CD4-positive, alpha-beta memory T cell (primary cell): ENCODE measurements at regions of chr3 and their contacts with region 1.

Region 1: DNA sequence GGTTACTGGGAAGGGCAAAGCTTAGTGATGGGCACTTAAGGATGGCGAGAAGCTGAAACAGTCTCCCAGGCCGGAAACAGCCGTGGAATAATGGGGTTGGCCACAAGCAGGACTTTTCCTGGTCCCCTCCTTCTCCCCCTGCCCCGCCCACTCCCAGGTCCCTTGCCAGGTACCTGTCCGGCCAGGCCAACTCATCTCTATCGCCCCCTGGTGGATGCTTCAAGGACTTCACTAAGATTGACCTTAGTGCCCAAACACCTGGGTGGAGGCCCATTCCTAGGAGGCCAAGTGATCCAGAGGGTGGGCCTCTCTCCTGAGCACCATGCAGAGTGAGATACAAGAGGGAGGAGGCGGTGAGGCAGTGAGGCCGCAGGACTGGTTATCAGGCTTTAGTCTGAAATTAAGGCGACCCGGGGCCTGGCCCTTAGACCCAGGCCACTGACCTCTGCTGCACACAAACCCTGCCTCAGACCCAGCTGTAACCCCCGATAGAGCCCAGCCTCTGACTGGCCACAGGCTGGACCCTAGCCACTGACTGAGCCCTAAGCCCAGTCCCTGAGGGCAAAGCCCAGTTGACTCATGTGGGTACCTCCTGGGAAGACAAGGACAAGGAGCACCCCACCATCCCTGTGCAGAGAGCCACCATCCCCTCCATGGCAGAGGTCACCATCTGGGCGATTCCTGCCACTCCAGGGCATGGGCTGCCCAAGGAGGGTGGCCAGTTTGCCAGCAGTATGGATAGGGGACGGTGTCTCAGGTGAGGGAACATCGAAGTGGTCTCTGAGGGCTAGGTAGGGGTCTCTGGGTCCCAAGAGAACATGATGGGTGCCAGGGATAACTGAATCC is 37.6 kb downstream of the VIPR1 start:
- DNase-seq: peak; percentile 47 to 64 (median 60)
- H3K4me3 ChIP-seq: no peak overlapping the region
- H3K4me3 Mint-ChIP-seq: no peak overlapping the region
- H3K27ac ChIP-seq: no peak overlapping the region
- H3K27ac Mint-ChIP-seq: peak overlapping the region in 5 of 7 donors; percentile 17 to 72 (median 52)
- H3K4me1 ChIP-seq: peaks cover 18% of the 10 kb centered on the region
- H3K4me1 Mint-ChIP-seq: peaks cover 13 to 32% (median 25%) of the 10 kb centered on the region in 4 donors
- H3K27me3 ChIP-seq: no peaks in the 10 kb centered on the region
- H3K27me3 Mint-ChIP-seq: no peaks in the 10 kb centered on the region

Region 2: GRCh38 chr3:42497009-42497731 is 42.9 kb before region 1 on chr3:
- CTCF ChIA-PET with region 1: interaction called, 1,823 read pairs
- POLR2A ChIA-PET with region 1: interaction called, 75 read pairs
- intact Hi-C with region 1: loop called (anchors 1 kb)
- DNase-seq: no peak
- H3K4me3 ChIP-seq: no peak overlapping the region
- H3K4me3 Mint-ChIP-seq: no peak overlapping the region
- H3K27ac ChIP-seq: no peak overlapping the region
- H3K27ac Mint-ChIP-seq: peak overlapping the region in 1 of 7 donors; percentile 18
- H3K4me1 ChIP-seq: peaks cover 13% of the 10 kb centered on the region
- H3K4me1 Mint-ChIP-seq: peaks cover 3 to 17% (median 11%) of the 10 kb centered on the region in 4 donors
- H3K27me3 ChIP-seq: peaks cover 9% of the 10 kb centered on the region
- H3K27me3 Mint-ChIP-seq: peaks cover 6 to 12% of the 10 kb centered on the region in 2 donors

Region 3: DNA sequence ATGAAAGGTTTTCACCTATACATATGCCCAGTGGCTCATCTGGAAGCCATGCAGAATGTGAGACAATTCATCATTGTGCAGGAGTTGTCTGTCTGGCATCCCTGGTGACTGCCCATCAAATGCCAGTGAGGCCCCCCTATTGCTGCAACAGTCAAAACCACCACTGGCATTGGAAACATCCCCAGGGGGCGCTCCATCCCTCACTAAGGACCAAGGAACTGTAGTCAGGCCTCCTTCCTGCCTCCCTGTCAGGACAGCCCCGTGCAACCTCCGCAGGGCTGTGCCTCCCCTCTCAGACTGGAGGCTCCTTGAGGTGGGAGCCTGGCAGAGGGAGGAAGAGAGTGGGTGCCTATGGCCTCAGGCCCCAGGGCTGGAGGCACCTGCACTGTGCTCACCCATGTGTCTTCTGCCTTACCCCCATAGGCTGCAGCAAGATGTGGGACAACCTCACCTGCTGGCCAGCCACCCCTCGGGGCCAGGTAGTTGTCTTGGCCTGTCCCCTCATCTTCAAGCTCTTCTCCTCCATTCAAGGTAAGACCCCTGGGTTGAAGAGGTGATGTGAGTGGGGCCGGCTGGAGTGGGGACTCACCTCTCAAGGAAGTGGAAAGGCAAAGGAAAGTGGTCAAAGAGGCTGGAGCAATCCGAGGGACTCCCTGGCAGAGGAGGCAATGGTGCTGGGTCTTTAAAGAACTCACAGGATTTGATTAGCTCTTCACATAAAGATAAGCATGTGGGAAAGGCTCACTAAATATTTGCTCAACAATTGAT is 21.1 kb before region 1 on chr3:
- CTCF ChIA-PET with region 1: interaction called, 1,823 read pairs
- POLR2A ChIA-PET with region 1: interaction called, 22 read pairs
- intact Hi-C with region 1: loop called (anchors 1 kb)
- DNase-seq: peak in 4 of 5 donors; percentile 52 to 60 (median 58)
- H3K4me3 ChIP-seq: no peak overlapping the region
- H3K4me3 Mint-ChIP-seq: peak overlapping the region in 7 of 8 donors; percentile 68 to 88 (median 79)
- H3K27ac ChIP-seq: peak overlapping the region; percentile 36
- H3K27ac Mint-ChIP-seq: peak overlapping the region; percentile 76 to 94 (median 93)
- H3K4me1 ChIP-seq: peaks cover 33% of the 10 kb centered on the region
- H3K4me1 Mint-ChIP-seq: peaks cover 24 to 61% (median 44%) of the 10 kb centered on the region in 4 donors
- H3K27me3 ChIP-seq: no peaks in the 10 kb centered on the region
- H3K27me3 Mint-ChIP-seq: no peaks in the 10 kb centered on the region

Region 4: GRCh38 chr3:42526616-42527367 is 13.3 kb before region 1 on chr3:
- CTCF ChIA-PET with region 1: interaction called, 1,823 read pairs
- POLR2A ChIA-PET with region 1: interaction called, 12 read pairs
- intact Hi-C with region 1: no loop called
- DNase-seq: peak; percentile 30 to 55 (median 42)
- H3K4me3 ChIP-seq: peak overlapping the region in 1 of 2 donors; percentile 1
- H3K4me3 Mint-ChIP-seq: peak overlapping the region in 7 of 8 donors; percentile 45 to 86 (median 74)
- H3K27ac ChIP-seq: peak overlapping the region; percentile 41
- H3K27ac Mint-ChIP-seq: peak overlapping the region; percentile 93 to 95 (median 94)
- H3K4me1 ChIP-seq: peaks cover 68% of the 10 kb centered on the region
- H3K4me1 Mint-ChIP-seq: peaks cover 44 to 94% (median 65%) of the 10 kb centered on the region in 4 donors
- H3K27me3 ChIP-seq: no peaks in the 10 kb centered on the region
- H3K27me3 Mint-ChIP-seq: no peaks in the 10 kb centered on the region

Region 5: DNA sequence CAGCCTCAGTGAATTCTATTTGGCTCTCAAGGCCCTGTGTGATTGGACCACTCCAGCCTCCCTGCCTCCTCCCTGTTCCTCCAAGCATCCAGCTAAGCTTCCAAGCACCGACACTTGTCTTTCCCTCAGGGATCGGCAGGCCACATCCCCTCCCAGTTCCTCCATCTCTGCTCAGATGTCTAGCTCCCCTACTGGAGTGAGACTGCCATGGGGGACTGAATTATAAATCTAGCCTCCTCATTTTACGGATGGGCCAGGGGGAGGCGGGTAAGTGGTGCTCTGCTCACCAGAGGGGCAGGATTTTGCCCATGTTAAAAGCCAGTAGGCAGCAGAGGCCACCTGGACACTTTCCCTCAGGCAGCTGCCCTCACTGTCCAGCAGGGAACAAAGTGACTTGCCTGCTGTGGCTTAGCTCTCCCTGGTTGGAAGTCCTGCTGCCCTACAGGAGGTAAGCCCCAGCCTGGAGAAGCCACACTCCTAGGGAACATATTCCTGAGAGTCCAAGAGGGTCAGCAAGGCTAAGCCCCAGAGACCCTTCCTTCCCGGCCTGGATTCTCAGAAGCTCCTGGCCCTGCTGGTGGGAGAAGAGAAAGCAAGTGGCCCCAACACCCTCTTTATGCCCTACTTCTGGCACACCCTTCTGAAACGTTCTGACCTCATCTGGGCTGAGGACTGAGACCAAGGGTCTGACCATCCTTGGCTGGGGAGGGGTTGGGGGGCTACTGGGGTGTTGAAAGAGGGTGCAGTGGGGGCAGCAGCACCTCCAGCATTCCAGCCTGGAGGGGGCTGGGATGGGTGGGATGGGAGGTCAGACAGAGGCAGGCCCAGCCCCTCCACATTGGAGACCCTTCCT is 171.6 kb after region 1 on chr3:
- CTCF ChIA-PET with region 1: no interaction called
- POLR2A ChIA-PET with region 1: no interaction called
- intact Hi-C with region 1: no loop called
- DNase-seq: no peak
- H3K4me3 ChIP-seq: no peak overlapping the region
- H3K4me3 Mint-ChIP-seq: no peak overlapping the region
- H3K27ac ChIP-seq: no peak overlapping the region
- H3K27ac Mint-ChIP-seq: no peak overlapping the region
- H3K4me1 ChIP-seq: no peaks in the 10 kb centered on the region
- H3K4me1 Mint-ChIP-seq: no peaks in the 10 kb centered on the region
- H3K27me3 ChIP-seq: no peaks in the 10 kb centered on the region
- H3K27me3 Mint-ChIP-seq: peaks cover 0 to 5% of the 10 kb centered on the region in 2 donors